B cell (primary cell): ENCODE measurements at regions of chr5 and their contacts with region 1.

Region 1: DNA sequence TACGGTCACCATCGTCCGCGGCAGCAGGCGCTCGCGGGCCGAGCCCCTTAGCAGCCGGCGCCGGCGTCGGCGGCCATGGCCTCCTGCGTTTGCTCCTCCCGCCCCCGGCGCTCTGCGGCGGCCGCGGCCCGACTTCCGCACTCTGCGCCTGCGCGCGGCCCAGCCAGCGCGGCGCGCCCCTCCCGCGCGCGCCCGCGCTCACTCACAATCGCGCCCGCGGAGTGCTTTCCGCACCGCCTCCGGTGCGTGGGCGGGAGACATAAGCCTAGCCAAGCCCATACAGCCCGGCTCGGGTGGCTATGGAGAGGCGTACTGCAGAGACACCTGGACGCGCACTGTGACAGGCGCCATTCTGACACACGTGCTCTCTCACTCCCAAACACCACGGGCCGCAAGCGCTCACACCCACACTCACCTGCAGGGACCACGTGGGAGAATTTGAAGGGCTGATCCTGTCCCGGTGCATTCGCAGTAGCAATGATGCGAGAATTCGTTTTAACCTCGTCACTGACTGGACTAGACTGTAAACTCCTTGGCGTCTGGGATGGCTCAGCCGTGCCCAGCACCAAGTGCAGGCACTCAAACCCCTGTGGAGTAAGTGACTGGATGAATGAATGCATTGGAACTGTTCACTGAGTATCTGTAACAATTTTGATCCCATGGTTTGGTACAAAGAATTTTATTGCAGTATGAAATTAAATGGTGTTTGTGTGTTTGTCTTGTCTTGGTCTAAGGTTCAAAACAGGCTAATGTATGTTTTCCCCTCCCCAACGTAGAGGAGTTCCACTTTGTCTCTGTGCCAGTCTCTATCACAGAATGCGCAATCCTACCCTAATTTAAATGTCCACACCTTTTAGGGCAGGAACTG is at the start of gene RNF145:
- DNase-seq: peak; percentile 98
- ATAC-seq: peak; percentile 80
- H3K4me3 ChIP-seq: peak within 1 kb of the TSS; percentile 62 to 91 (median 82)
- H3K4me3 Mint-ChIP-seq: peak within 1 kb of the TSS; percentile 98
- H3K27ac ChIP-seq: peak within 1 kb of the TSS; percentile 84 to 85
- H3K27ac Mint-ChIP-seq: peak within 1 kb of the TSS; percentile 97
- H3K4me1 ChIP-seq: peaks cover 38 to 43% of the 10 kb centered on the region in 2 donors
- H3K4me1 Mint-ChIP-seq: peaks cover 50% of the 10 kb centered on the region
- H3K27me3 ChIP-seq: no peaks in the 10 kb centered on the region
- H3K27me3 Mint-ChIP-seq: no peaks in the 10 kb centered on the region
- CTCF ChIP-seq: no peak
- total RNA-seq, gene RNF145: 56.0 and 57.2 TPM in 2 replicates

Region 2: GRCh38 chr5:157731272-157732129 is 1478.2 kb before region 1 on chr5 and contains the start of gene THG1L:
- CTCF ChIA-PET with region 1: no interaction called
- POLR2A ChIA-PET with region 1: no interaction called
- intact Hi-C with region 1: loop called (anchors 5 kb)
- DNase-seq: peak; percentile 93
- ATAC-seq: peak; percentile 84
- H3K4me3 ChIP-seq: peak within 1 kb of the TSS; percentile 67 to 94 (median 93)
- H3K4me3 Mint-ChIP-seq: peak within 1 kb of the TSS; percentile 98
- H3K27ac ChIP-seq: peak within 1 kb of the TSS; percentile 92 to 94
- H3K27ac Mint-ChIP-seq: peak within 1 kb of the TSS; percentile 99
- H3K4me1 ChIP-seq: peaks cover 21 to 26% of the 10 kb centered on the region in 2 donors
- H3K4me1 Mint-ChIP-seq: peaks cover 30% of the 10 kb centered on the region
- H3K27me3 ChIP-seq: no peaks in the 10 kb centered on the region
- H3K27me3 Mint-ChIP-seq: no peaks in the 10 kb centered on the region
- CTCF ChIP-seq: no peak
- total RNA-seq, gene THG1L: 14.1 and 14.6 TPM in 2 replicates

Region 3: DNA sequence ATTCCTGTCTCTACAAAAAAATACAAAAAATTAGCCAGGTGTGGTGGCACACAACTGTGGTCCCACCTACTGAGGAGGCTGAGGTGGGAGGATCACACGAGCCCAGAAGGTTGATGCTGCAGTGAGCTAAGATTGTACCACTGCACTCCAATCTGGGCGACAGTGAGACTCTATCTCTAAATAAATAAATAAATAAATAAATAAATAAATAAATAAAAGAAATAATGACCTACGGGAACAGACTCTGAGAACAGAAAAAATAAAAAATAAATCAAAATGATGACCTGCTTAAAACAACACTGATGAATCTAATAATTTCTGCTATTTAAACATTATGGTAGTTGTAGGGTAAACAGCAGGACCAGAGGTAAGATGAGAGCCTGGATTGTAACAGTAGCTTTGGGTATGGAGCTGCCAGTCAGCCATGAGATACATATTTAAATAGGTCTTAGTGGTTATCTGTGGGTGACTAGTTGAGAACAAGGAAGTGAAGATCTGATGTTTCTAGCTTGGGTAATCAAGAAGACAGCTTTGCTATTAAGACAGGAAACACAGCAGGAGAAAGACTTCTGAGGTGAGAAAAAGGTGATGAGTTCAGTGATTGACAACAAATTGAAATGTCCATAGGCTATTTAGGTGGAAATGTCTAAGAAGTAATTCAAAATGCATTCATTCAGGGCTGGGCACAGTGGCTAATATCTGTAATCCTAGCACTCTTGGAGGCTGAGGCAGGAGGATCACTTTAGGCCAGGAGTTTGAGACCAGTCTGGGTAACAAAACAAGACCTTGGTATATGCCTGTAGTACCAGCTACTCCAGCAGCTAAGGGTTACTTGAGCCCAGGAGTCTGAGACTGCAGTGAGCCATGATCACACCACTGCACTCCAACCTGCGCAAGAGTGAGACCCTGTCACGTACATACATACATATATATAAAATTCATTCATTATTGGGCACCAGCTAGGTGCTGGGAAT is 11.3 kb before region 1 on chr5:
- CTCF ChIA-PET with region 1: interaction called, 25 read pairs
- POLR2A ChIA-PET with region 1: interaction called, 23 read pairs
- intact Hi-C with region 1: loop called (anchors 1 kb)
- DNase-seq: peak; percentile 80
- ATAC-seq: peak; percentile 97
- H3K4me3 ChIP-seq: no peak overlapping the region
- H3K4me3 Mint-ChIP-seq: peak overlapping the region; percentile 30
- H3K27ac ChIP-seq: peak overlapping the region; percentile 64 to 67
- H3K27ac Mint-ChIP-seq: peak overlapping the region; percentile 76
- H3K4me1 ChIP-seq: peaks cover 26 to 42% of the 10 kb centered on the region in 2 donors
- H3K4me1 Mint-ChIP-seq: peaks cover 49% of the 10 kb centered on the region
- H3K27me3 ChIP-seq: no peaks in the 10 kb centered on the region
- H3K27me3 Mint-ChIP-seq: no peaks in the 10 kb centered on the region
- CTCF ChIP-seq: no peak

Region 4: DNA sequence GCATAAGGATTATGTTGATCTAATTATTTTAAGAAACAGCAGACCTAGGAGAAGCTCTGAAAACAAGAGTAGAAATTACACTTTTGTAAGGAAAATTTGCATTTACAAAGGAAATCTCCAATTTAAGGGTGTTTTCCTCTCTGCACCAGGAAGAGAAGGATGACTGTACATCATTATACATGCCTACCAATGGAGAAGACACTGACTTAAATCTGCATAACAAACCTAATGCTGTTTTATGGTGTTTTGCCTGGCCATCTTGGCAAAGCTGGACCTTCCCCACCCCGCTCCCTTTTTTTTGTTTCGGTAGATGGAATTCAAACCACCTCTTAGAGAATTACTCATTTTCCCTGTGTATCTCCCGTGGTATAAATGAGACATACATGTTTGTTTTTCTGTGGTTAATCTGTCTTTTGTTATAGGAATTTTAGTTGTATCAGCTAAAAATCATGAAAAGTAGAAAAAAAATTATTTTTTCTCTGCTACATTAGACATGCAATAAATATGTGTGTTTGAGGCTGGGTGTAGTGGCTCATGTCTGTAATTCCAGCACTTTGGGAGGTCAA is 91.8 kb after region 1 on chr5:
- CTCF ChIA-PET with region 1: no interaction called
- POLR2A ChIA-PET with region 1: no interaction called
- intact Hi-C with region 1: no loop called
- DNase-seq: no peak
- ATAC-seq: no peak
- H3K4me3 ChIP-seq: no peak overlapping the region
- H3K4me3 Mint-ChIP-seq: no peak overlapping the region
- H3K27ac ChIP-seq: no peak overlapping the region
- H3K27ac Mint-ChIP-seq: no peak overlapping the region
- H3K4me1 ChIP-seq: no peaks in the 10 kb centered on the region
- H3K4me1 Mint-ChIP-seq: peaks cover 16% of the 10 kb centered on the region
- H3K27me3 ChIP-seq: no peaks in the 10 kb centered on the region
- H3K27me3 Mint-ChIP-seq: no peaks in the 10 kb centered on the region
- CTCF ChIP-seq: no peak

Region 5: GRCh38 chr5:159469496-159470372 is 260.1 kb after region 1 on chr5:
- CTCF ChIA-PET with region 1: no interaction called
- POLR2A ChIA-PET with region 1: no interaction called
- intact Hi-C with region 1: no loop called
- DNase-seq: peak; percentile 18
- ATAC-seq: peak; percentile 54
- H3K4me3 ChIP-seq: no peak overlapping the region
- H3K4me3 Mint-ChIP-seq: no peak overlapping the region
- H3K27ac ChIP-seq: no peak overlapping the region
- H3K27ac Mint-ChIP-seq: no peak overlapping the region
- H3K4me1 ChIP-seq: peaks cover 4 to 13% of the 10 kb centered on the region in 2 donors
- H3K4me1 Mint-ChIP-seq: peaks cover 16% of the 10 kb centered on the region
- H3K27me3 ChIP-seq: no peaks in the 10 kb centered on the region
- H3K27me3 Mint-ChIP-seq: no peaks in the 10 kb centered on the region
- CTCF ChIP-seq: no peak

Region 6: DNA sequence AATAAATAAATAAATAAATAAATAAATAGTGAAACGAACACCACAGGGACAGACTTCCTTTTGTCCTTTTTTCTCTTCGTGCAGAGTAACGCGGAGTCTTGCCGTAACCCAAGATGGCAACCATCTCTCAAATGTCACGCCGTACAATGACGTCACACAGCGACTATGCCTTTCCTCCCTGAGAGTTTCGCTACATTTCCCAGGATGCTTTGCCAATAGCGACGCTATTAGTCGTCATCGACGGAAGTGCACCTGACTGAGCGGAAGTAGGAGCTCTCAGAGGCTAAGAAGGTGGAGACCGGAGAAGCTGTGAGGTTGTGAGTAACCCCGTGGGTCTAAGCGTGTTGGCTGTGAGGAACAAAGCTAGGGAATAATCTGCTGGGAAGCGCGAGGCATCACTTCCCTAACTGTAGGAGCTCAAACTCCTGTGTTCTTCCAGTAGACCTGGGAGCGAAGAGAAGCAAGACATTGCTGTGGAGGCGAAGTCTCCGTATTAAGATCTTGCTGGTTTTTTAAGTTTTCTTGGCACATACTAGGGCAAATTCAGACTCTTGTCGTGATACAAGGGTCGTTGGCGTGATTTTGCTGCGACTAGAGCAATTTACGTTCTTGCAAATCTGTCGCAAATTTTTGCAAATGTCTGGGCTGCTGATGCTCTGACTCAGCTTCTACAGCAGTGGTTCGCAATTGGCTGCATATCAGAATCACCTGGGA is 799.4 kb after region 1 on chr5 and contains the start of gene TTC1:
- CTCF ChIA-PET with region 1: no interaction called
- POLR2A ChIA-PET with region 1: no interaction called
- intact Hi-C with region 1: loop called (anchors 5 kb)
- DNase-seq: peak; percentile 98
- ATAC-seq: peak; percentile 97
- H3K4me3 ChIP-seq: peak within 1 kb of the TSS; percentile 85 to 100 (median 98)
- H3K4me3 Mint-ChIP-seq: peak within 1 kb of the TSS; percentile 87
- H3K27ac ChIP-seq: peak within 1 kb of the TSS; percentile 77 to 96
- H3K27ac Mint-ChIP-seq: peak within 1 kb of the TSS; percentile 83
- H3K4me1 ChIP-seq: peaks cover 18 to 19% of the 10 kb centered on the region in 2 donors
- H3K4me1 Mint-ChIP-seq: peaks cover 25% of the 10 kb centered on the region
- H3K27me3 ChIP-seq: no peaks in the 10 kb centered on the region
- H3K27me3 Mint-ChIP-seq: no peaks in the 10 kb centered on the region
- CTCF ChIP-seq: no peak
- total RNA-seq, gene TTC1: 37.5 and 40.4 TPM in 2 replicates

Region 7: DNA sequence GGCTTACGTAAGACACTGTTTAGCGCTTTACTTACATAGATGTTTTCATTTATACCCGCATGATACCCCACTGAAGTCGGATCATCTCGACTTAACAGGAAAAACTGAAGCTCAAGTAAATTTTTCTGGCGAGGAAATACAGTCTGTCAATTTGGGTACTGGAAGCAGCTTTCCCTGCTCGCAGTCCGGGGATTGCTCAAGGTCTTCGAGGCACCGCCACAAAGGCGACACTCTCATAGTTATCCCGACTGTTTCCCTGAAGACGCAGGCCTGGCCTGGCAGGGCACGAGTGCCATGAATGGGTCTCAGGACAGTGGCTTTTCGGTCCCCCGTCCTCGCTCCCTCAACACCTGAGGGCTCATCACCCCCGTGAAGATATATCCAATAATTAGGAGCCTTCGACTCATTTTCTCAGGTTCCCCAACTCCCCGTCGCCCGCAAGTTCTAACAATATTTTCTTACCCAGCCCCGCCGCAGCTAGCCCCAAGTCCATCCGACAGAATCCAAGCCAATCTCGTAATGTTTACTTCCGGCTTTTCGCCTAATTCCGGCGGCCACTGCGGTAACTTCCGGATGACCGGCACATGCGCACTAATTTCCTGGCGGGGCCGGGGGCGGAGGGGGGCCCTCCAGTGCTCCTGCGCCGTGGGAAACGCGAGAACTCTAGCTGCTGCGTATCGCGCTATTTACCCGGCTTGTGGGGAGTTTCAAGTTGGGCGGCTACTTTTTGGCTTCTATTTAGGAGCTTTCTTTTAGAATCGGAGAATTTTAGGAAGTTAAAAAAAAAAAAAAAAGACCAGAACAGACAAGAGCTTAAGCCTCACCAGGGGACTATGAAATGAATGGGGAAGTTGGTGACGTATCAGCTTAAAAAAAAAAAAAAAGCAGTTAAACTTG is 1209.1 kb after region 1 on chr5 and contains the start of gene SLU7:
- CTCF ChIA-PET with region 1: no interaction called
- POLR2A ChIA-PET with region 1: no interaction called
- intact Hi-C with region 1: loop called (anchors 5 kb)
- DNase-seq: peak; percentile 97
- ATAC-seq: peak; percentile 73
- H3K4me3 ChIP-seq: peak within 1 kb of the TSS; percentile 72 to 99 (median 95)
- H3K4me3 Mint-ChIP-seq: peak within 1 kb of the TSS; percentile 92
- H3K27ac ChIP-seq: peak within 1 kb of the TSS; percentile 95
- H3K27ac Mint-ChIP-seq: peak within 1 kb of the TSS; percentile 91
- H3K4me1 ChIP-seq: peaks cover 32 to 41% of the 10 kb centered on the region in 2 donors
- H3K4me1 Mint-ChIP-seq: peaks cover 64% of the 10 kb centered on the region
- H3K27me3 ChIP-seq: no peaks in the 10 kb centered on the region
- H3K27me3 Mint-ChIP-seq: no peaks in the 10 kb centered on the region
- CTCF ChIP-seq: no peak
- total RNA-seq, gene SLU7: 68.3 and 83.2 TPM in 2 replicates